Activated CD4-positive, alpha-beta T cell treated with anti-CD3 and anti-CD28 coated beads for 36 hours (primary cell): ENCODE measurements at regions of chr6 and their contacts with region 1.

Region 1: GRCh38 chr6:109165392-109165974 is 70.2 kb downstream of the CEP57L1 start:
- DNase-seq: no peak
- ATAC-seq: no peak
- H3K4me3 Mint-ChIP-seq: no peak overlapping the region
- H3K27ac Mint-ChIP-seq: no peak overlapping the region
- H3K4me1 Mint-ChIP-seq: no peaks in the 10 kb centered on the region
- H3K27me3 Mint-ChIP-seq: no peaks in the 10 kb centered on the region

Region 2: DNA sequence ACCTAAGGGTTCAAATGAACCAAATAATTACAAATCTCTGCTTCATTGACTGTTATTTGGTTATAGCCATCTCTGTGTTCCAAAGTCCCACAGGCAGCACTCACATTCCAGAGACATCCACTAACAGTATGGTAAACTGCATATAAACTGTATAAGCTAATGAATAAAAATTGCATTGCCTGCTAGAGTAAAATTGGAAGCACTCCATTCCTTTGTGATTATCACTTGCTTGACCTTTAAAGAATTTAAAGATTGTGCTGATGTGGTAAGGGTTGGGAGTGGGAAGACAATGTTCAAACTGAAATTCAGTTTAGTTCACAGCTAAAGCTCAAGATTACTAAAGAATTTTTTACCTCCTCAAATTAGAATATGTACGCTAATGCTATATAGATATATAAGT is 1059.9 kb before region 1 on chr6:
- CTCF ChIA-PET with region 1: no interaction called
- POLR2A ChIA-PET with region 1: interaction called, 10 read pairs
- intact Hi-C with region 1: no loop called
- DNase-seq: no peak
- ATAC-seq: no peak
- H3K4me3 Mint-ChIP-seq: no peak overlapping the region
- H3K27ac Mint-ChIP-seq: no peak overlapping the region
- H3K4me1 Mint-ChIP-seq: no peaks in the 10 kb centered on the region
- H3K27me3 Mint-ChIP-seq: peaks cover 4% of the 10 kb centered on the region